ENCODE measurements at regions of chr9 and their contacts with region 1.

Region 1: GRCh38 chr9:76658535-76659231 is 105.6 kb upstream of the PCA3 start:
- DNase-seq: no peak
- H3K4me3 Mint-ChIP-seq: no peak overlapping the region
- H3K27ac Mint-ChIP-seq: no peak overlapping the region
- H3K4me1 Mint-ChIP-seq: peaks cover 22% of the 10 kb centered on the region
- H3K27me3 Mint-ChIP-seq: no peaks in the 10 kb centered on the region

Region 2: GRCh38 chr9:76403352-76403751 is 255.3 kb before region 1 on chr9:
- intact Hi-C with region 1: loop called (anchors 1 kb)
- DNase-seq: peak; percentile 12
- H3K4me3 Mint-ChIP-seq: peak overlapping the region; percentile 25
- H3K27ac Mint-ChIP-seq: peak overlapping the region; percentile 32
- H3K4me1 Mint-ChIP-seq: peaks cover 23% of the 10 kb centered on the region
- H3K27me3 Mint-ChIP-seq: no peaks in the 10 kb centered on the region

Region 3: DNA sequence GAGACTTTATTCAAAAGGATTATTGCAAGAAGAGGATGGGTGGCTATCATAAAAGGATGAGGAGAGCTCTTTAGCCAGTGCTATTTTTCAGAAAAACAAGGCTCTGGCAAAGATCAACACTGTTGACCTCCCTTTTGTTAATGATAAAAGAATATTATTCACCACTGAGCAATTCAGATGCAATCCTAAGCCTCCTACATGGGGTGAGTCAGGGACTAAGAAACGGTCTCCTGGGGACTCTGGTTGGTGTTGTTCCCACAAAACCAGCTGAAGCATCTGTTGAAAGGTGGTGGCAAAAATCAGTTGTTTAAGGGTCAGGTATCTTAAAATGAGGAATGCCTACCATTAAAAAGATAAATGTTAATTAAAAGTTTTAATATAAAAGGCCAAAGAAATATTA is 207.4 kb before region 1 on chr9:
- intact Hi-C with region 1: loop called (anchors 1 kb)
- DNase-seq: no peak
- H3K4me3 Mint-ChIP-seq: no peak overlapping the region
- H3K27ac Mint-ChIP-seq: no peak overlapping the region
- H3K4me1 Mint-ChIP-seq: peaks cover 24% of the 10 kb centered on the region
- H3K27me3 Mint-ChIP-seq: no peaks in the 10 kb centered on the region

Region 4: DNA sequence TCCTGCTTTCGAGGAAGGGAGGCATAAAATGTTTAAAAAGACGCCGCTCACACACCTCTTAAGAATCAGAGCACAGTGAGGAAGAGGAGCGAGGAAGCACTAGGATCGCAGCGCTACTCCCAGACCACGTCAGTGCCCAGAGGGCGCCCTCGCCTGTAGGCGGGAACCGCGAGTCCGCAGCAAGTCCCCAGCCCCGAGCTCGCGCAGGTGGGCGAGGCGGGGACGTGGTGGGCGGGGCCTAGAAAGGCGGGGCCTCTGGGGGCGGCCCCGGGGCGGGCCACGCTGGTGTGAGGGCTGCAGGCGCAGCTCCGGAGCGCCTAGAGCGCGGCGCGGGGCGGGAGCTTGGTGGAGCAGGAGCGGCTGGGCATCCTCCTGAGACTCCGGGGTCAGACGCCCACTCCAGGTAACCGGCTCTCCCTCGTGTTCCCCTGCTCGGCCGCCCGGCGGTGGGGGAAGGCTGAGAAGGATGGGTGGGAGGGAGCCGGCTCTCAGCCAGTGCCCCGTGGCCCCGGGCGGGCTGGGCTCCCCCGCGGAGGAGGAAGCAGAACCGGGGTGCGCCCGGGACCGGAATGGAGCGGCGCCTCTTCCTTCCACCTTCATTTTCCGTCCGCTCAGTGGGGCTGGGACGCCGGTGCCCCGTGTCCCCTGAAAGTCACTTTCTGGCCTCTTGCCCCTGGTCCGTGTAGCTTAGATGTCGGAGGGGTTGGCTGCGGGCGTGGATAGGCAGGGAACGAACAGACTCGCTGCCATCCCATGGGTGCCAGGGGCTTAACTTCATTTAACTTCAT is 199.6 kb before region 1 on chr9 and contains the start of gene GCNT1:
- intact Hi-C with region 1: loop called (anchors 1 kb)
- DNase-seq: peak; percentile 92
- H3K4me3 Mint-ChIP-seq: peak within 1 kb of the TSS; percentile 87
- H3K27ac Mint-ChIP-seq: peak within 1 kb of the TSS; percentile 91
- H3K4me1 Mint-ChIP-seq: peaks cover 35% of the 10 kb centered on the region
- H3K27me3 Mint-ChIP-seq: peaks cover 3% of the 10 kb centered on the region
- total RNA-seq, gene GCNT1: 11.6 and 13.1 TPM in 2 replicates

Region 5: GRCh38 chr9:76576344-76576743 is 82.3 kb before region 1 on chr9:
- intact Hi-C with region 1: loop called (anchors 5 kb)
- DNase-seq: peak; percentile 59
- H3K4me3 Mint-ChIP-seq: peak overlapping the region; percentile 25
- H3K27ac Mint-ChIP-seq: peak overlapping the region; percentile 89
- H3K4me1 Mint-ChIP-seq: peaks cover 34% of the 10 kb centered on the region
- H3K27me3 Mint-ChIP-seq: peaks cover 1% of the 10 kb centered on the region

Region 6: DNA sequence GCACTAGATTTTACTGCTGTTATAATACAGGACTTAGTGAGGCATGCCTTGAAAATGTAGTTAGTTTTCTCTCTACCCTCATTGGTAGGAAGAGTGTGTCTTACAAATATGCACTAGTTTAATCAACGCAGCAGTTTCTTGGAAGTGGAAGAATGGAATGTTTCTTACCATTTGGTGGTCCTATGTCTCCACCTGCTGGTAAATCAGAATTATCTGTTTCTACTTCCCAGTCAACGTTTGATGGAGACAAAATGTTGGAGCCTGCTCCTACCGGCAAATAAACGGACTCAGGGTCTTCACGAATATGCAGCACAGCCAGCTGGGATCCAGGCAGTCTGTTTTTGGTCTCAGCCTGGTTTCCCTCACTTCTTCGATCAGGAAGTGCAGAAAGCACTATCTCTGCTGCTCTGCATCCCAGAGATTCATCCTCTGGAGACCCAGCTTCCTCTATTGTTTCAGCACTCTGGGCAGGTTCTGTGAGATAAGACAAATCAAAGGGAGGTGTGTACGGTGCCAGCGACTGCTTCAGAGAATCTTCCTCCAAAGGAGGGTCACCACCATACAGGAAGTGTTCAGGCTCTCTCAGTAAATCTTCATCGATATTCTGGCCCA is 46.0 kb after region 1 on chr9:
- intact Hi-C with region 1: loop called (anchors 2 kb)
- DNase-seq: no peak
- H3K4me3 Mint-ChIP-seq: no peak overlapping the region
- H3K27ac Mint-ChIP-seq: no peak overlapping the region
- H3K4me1 Mint-ChIP-seq: peaks cover 6% of the 10 kb centered on the region
- H3K27me3 Mint-ChIP-seq: peaks cover 13% of the 10 kb centered on the region

Region 7: DNA sequence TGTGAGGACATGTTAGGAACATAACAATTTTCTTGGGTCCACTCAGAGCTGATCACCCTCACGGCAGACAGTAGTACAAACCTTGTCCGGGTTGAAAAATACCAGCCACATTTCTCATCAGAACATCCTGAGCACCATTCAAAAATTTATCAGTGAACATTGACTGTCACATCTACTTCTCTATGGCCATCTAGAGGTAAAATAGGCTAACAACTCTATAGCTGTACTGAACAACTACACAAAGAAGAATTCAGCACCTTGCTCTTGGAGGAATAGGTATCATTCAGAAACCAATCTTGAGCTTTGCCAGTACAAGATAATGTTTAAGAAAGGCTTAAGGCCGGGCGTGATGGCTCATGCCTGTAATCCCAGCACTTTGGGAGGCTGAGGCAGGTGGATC is 413.3 kb after region 1 on chr9:
- intact Hi-C with region 1: no loop called
- DNase-seq: no peak
- H3K4me3 Mint-ChIP-seq: no peak overlapping the region
- H3K27ac Mint-ChIP-seq: no peak overlapping the region
- H3K4me1 Mint-ChIP-seq: no peaks in the 10 kb centered on the region
- H3K27me3 Mint-ChIP-seq: no peaks in the 10 kb centered on the region